ENCODE measurements at regions of chr10 and their contacts with region 1.

Region 1: GRCh38 chr10:87094373-87095235 is at the starts of genes GLUD1 and SHLD2:
- DNase-seq: peak; percentile 90
- H3K4me3 Mint-ChIP-seq: peak within 1 kb of the TSS; percentile 95
- H3K27ac Mint-ChIP-seq: peak within 1 kb of the TSS; percentile 96
- H3K4me1 Mint-ChIP-seq: peaks cover 45% of the 10 kb centered on the region
- H3K27me3 Mint-ChIP-seq: no peaks in the 10 kb centered on the region
- total RNA-seq, gene GLUD1: 105 and 109 TPM in 2 replicates
- total RNA-seq, gene SHLD2: 39.9 and 41.7 TPM in 2 replicates

Region 2: DNA sequence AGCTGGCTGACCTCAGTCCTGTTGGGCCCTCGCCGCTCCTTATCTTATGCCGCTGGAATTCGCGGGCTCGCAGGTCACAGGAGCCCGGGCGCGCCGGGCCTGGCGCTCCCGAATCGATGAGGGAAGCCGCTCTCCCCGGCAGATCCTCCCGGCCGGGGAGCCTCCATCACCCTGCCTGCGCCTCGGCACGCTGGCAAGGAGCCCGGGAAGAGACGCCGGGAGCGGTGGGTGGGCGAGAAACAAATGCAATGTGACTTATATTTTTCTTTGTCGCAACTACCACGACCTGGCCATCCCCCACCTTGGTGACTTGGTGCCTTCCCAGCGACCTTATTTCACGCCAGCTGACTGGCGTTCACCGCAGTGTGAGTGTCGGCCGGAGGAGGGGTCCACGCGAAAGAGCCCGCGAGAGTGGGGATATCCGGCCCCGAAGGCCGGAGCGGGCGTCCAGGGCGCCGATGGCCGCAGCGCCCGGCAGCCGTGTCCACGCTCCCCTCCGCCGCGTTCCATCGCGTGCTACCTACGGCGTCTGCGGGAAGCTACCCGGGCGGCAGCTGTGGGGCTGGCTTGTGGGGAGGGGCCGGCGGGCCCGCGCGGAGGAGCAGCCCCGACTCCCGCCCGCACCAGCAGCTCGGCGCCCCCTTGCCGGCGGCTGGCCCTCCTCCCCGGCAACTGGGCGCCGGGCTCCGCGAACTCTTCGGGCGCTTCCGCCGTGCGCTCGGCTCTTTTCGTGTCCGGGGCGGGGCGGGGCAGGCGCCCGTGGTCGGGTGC is 338.7 kb before region 1 on chr10:
- intact Hi-C with region 1: loop called (anchors 5 kb)
- DNase-seq: peak; percentile 84
- H3K4me3 Mint-ChIP-seq: peak overlapping the region; percentile 80
- H3K27ac Mint-ChIP-seq: peak overlapping the region; percentile 67
- H3K4me1 Mint-ChIP-seq: peaks cover 41% of the 10 kb centered on the region
- H3K27me3 Mint-ChIP-seq: peaks cover 43% of the 10 kb centered on the region

Region 3: GRCh38 chr10:86899670-86900276 is 194.8 kb before region 1 on chr10:
- intact Hi-C with region 1: no loop called
- DNase-seq: no peak
- H3K4me3 Mint-ChIP-seq: no peak overlapping the region
- H3K27ac Mint-ChIP-seq: no peak overlapping the region
- H3K4me1 Mint-ChIP-seq: peaks cover 2% of the 10 kb centered on the region
- H3K27me3 Mint-ChIP-seq: no peaks in the 10 kb centered on the region

Region 4: DNA sequence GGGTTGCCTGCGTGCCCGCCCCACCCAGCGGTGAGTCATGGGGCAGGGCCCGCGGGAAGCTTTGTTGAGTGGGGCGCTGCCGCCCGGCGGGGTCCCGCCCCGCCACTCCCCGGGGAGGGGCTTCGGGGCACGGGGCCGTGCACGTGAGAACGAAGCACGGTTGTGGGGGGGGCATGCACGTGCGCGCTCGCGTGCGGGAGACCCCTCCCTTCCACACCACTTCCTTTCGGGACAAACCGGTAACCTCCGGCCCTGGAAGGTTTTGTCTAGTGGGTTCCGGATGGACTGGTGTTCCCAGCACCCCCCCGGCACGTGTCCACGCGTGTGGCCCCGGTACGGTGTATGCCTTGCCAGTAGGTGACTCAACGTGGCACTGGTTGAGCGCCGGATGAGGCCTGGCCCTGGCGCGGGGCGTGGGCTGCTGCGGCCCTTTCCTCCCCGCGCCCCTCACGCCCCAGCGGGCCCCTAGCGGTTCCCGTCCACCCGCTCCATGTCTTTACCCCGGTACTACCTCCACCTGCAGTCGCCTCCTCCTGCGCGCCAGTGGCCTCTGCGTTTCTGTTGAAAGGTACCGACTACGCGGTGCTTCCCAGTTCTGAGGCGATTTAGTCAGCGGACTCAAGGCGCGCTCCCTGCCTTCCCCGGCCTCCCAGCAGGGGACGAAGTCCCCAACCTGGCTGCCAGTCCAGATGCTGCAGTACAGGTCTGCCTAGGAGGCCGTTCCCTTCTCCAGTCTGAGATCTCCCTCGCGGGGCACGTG is 123.2 kb before region 1 on chr10:
- intact Hi-C with region 1: loop called (anchors 2 kb)
- DNase-seq: peak; percentile 76
- H3K4me3 Mint-ChIP-seq: peak overlapping the region; percentile 74
- H3K27ac Mint-ChIP-seq: peak overlapping the region; percentile 33
- H3K4me1 Mint-ChIP-seq: peaks cover 13% of the 10 kb centered on the region
- H3K27me3 Mint-ChIP-seq: peaks cover 32% of the 10 kb centered on the region

Region 5: GRCh38 chr10:87079106-87079836 is 15.3 kb before region 1 on chr10:
- intact Hi-C with region 1: loop called (anchors 1 kb)
- DNase-seq: no peak
- H3K4me3 Mint-ChIP-seq: no peak overlapping the region
- H3K27ac Mint-ChIP-seq: no peak overlapping the region
- H3K4me1 Mint-ChIP-seq: peaks cover 25% of the 10 kb centered on the region
- H3K27me3 Mint-ChIP-seq: no peaks in the 10 kb centered on the region

Measured in activated T-helper 2 cell treated with anti-CD3 and anti-CD28 coated beads, Interferon-gamma antibody, Interleukin-2, Interleukin-4, amounts not matched to agents 10 μg/mL and 5 μg/mL and 100 μg/mL, durations not matched to agents 14 hours and 24 hours and 36 hours (primary cell).